ENCODE measurements at regions of chr10 and their contacts with region 1.

Region 1: GRCh38 chr10:11782793-11783557 is 40.2 kb upstream of the PROSER2 start:
- DNase-seq: peak; percentile 3
- ATAC-seq: peak; percentile 75
- H3K4me3 Mint-ChIP-seq: no peak overlapping the region
- H3K27ac Mint-ChIP-seq: no peak overlapping the region
- H3K4me1 Mint-ChIP-seq: peaks cover 4% of the 10 kb centered on the region
- H3K27me3 Mint-ChIP-seq: peaks cover 5% of the 10 kb centered on the region
- CTCF ChIP-seq: peak; percentile 63

Region 2: DNA sequence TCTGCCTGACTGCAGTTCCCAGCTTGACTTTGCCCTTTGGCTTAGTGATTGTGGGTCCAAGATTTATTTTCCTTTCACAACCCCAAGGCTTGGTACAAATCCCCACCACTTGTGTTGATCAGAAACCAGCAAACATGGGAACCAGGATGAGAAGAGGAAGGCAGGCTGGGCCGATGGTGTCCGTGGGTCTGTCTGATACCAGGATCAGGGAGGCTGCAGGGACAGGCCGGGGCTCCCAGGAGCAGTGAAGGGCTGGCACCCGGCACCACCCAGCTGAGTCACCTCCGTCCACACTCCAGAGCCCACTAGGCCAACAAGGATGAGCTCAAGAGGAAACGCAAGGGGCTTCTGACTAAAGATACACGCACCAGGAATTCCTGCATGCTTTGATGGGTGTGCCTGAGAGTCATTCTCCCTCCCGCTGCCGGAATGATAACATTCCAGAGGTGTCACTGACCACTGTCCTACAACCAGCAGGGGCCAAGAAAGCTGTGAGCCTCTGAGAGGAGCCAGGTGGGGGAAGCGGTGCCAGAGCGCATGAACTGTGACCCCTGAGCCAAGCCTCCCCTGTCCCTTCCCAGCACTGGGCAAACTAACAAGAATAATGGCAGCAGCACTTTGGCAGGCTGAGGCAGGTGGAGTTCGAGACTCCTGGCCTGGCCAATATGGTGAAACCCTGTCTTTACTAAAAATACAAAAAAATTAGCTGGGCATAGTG is 10.9 kb after region 1 on chr10:
- CTCF ChIA-PET with region 1: interaction called, 40 read pairs
- POLR2A ChIA-PET with region 1: no interaction called
- intact Hi-C with region 1: no loop called
- DNase-seq: no peak
- ATAC-seq: no peak
- H3K4me3 Mint-ChIP-seq: no peak overlapping the region
- H3K27ac Mint-ChIP-seq: no peak overlapping the region
- H3K4me1 Mint-ChIP-seq: no peaks in the 10 kb centered on the region
- H3K27me3 Mint-ChIP-seq: peaks cover 3% of the 10 kb centered on the region
- CTCF ChIP-seq: no peak

Region 3: DNA sequence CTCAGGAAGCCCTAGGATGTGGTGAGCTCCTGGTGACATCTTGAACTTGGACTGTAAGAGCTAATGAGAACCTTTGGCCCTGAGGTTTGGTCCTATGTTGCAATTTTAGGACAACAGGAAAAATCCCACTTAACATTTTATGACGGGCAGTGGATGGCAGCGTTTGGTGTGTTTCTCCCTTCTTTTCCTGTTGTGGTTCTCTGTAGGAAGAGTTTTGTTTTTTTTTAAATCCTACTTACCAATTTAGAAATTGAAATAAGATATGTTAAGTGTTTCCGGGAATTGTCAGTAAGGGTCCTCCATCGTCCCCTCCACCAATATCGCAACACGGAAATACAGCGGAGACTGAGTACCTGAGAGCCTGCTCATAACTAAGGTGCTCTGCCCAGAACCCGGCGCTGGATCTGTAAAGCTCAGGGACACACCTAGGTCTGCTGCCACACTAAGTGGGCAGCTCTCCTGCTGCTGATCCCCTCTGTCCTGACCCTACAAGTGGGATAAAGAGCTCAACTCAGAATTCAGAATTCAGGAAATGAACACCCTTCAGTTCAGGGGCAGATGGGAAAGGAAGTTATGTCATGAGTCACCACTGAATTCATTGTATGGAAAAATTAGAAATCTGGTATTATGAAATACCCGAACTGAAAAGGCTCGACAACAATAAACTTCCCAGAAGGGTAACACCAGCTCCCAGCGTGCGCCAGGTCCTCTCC is 31.0 kb after region 1 on chr10:
- CTCF ChIA-PET with region 1: interaction called, 15 read pairs
- POLR2A ChIA-PET with region 1: no interaction called
- intact Hi-C with region 1: no loop called
- DNase-seq: no peak
- ATAC-seq: no peak
- H3K4me3 Mint-ChIP-seq: no peak overlapping the region
- H3K27ac Mint-ChIP-seq: no peak overlapping the region
- H3K4me1 Mint-ChIP-seq: no peaks in the 10 kb centered on the region
- H3K27me3 Mint-ChIP-seq: no peaks in the 10 kb centered on the region
- CTCF ChIP-seq: no peak

Measured in activated CD8-positive, alpha-beta T cell treated with anti-CD3 and anti-CD28 coated beads for 36 hours (primary cell).